ENCODE measurements at regions of chr16 and their contacts with region 1.

Region 1: GRCh38 chr16:84504420-84505248 is at the start of gene MEAK7:
- DNase-seq: peak; percentile 99
- H3K4me3 ChIP-seq: peak within 1 kb of the TSS; percentile 69 to 96 (median 96)
- H3K27ac ChIP-seq: peak within 1 kb of the TSS; percentile 92
- H3K4me1 ChIP-seq: peaks cover 53% of the 10 kb centered on the region
- H3K27me3 ChIP-seq: no peaks in the 10 kb centered on the region
- CTCF ChIP-seq: peak in 1 of 2 donors; percentile 8
- total RNA-seq, gene MEAK7: 73.5 to 107 TPM

Region 2: DNA sequence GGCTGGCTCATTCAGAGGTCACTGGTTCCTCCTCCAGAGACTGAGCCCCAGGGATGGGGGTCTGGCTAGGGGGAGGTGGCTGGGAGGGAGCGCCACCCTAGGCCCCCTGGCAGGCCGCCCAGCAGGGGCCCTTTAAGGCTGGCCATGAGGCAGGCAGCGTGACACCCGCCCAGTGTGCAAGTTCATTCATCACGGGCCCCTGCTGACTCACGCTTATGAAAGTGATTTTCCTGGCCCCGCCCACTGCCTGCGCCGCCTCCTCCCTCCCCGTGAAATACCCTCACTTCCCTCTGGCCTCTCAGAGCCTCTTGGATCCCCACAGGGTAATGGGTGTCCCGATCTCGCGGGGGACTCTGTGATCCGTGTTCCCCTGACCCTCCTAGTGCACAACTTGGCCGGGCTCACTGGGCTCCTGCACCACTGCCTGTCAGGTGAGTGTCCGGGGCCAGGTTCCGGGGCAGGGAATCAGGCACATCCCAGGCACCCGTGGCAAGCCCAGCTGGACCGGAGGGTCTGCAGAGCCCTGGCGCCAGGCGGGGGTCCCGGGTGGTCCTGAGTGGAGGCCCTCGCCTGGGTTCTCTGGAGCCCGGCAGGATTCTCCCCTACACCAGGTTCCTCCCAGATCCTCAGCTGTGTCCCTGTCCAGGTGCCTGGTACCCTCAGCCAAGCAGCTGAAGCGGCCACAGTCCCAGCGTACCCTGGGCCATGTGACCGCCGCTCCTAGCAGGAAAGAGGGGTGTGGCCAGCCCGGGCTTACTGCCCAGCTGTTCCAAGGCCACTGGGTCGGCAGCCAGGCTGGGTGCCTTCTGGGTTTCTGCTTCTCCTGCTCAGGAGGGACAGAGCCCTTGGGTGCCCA is 551.5 kb before region 1 on chr16 and contains the start of gene OSGIN1:
- CTCF ChIA-PET with region 1: no interaction called
- dilution Hi-C with region 1: no loop called
- in situ Hi-C with region 1: no loop called
- intact Hi-C with region 1: loop called (anchors 10 kb)
- DNase-seq: peak; percentile 92
- H3K4me3 ChIP-seq: peak within 1 kb of the TSS; percentile 65 to 76 (median 66)
- H3K27ac ChIP-seq: peak within 1 kb of the TSS; percentile 82
- H3K4me1 ChIP-seq: peaks cover 21% of the 10 kb centered on the region
- H3K27me3 ChIP-seq: no peaks in the 10 kb centered on the region
- CTCF ChIP-seq: no peak
- total RNA-seq, gene OSGIN1: 3.3 to 9.3 TPM

Region 3: DNA sequence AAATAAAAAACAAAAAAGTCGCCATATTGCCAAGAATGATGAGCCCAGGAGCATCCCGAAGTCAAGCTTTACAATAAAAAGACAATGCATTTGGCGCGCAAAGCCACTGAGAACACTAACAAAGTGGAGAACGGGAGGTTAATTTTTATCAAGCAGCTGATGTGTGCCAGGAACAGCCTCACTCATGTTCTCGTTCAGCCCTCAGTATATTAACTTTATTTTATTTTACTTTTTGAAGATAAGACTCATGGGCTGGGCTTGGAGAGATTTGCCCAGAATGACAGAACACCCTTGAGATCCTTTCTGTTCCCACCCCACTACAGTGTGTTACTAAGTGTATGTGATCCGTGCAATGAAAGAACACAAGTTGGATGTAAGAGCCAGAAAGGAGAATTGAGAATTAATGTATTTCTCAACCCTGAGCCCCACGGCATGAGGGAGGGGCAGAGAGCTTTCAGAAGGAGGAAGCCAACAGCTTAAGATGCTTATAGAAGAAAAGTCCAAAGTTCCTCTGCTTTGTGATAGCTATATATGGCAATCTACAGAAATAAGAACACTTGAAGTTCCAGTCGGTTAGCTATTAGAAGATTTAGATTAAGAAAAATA is 64.9 kb after region 1 on chr16:
- CTCF ChIA-PET with region 1: no interaction called
- dilution Hi-C with region 1: loop called (anchors 5 kb)
- in situ Hi-C with region 1: no loop called
- intact Hi-C with region 1: no loop called
- DNase-seq: no peak
- H3K4me3 ChIP-seq: no peak overlapping the region
- H3K27ac ChIP-seq: no peak overlapping the region
- H3K4me1 ChIP-seq: no peaks in the 10 kb centered on the region
- H3K27me3 ChIP-seq: no peaks in the 10 kb centered on the region
- CTCF ChIP-seq: no peak

Region 4: DNA sequence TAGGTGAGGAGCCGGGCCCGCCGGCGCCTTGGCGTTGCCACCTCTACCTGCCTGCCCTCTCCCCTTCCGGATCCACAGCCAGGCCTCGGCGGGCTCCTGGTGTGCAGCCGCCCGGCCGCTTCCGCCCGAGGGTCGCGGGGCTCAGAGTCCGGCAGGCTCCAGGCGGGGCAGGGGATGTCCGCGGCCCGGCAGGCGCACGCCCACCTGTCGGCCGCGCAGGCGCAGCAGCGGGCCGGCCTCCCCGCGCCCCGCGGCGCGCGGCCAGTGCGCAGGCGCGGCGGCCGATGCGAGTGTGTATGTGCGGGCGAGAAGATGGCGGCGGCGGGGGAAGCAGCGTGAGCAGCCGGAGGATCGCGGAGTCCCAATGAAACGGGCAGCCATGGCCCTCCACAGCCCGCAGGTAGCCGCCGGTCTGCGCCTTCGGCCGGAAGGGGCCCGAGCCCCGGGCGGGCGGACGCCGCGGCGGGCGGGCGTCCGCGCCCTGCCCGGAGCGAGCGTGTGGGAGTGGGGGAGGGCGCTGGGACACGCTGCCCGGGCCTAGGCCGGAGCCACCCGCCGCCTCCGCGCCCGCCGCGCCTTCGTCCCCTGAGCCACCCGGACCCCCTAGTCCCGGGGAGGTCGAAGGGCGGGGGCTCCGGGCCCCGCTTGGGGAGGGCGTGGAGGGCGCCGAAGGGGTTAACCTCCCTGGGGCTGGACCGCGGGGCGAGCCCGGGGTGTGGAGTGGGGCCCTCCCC is 195.2 kb after region 1 on chr16 and contains the start of gene USP10:
- CTCF ChIA-PET with region 1: no interaction called
- dilution Hi-C with region 1: no loop called
- in situ Hi-C with region 1: loop called in 1 of 2 experiments (anchors 25 kb)
- intact Hi-C with region 1: no loop called
- DNase-seq: peak; percentile 66
- H3K4me3 ChIP-seq: peak within 1 kb of the TSS; percentile 75 to 90 (median 86)
- H3K27ac ChIP-seq: peak within 1 kb of the TSS; percentile 71
- H3K4me1 ChIP-seq: peaks cover 4% of the 10 kb centered on the region
- H3K27me3 ChIP-seq: no peaks in the 10 kb centered on the region
- CTCF ChIP-seq: no peak
- total RNA-seq, gene USP10: 60.5 to 111 TPM

Region 5: DNA sequence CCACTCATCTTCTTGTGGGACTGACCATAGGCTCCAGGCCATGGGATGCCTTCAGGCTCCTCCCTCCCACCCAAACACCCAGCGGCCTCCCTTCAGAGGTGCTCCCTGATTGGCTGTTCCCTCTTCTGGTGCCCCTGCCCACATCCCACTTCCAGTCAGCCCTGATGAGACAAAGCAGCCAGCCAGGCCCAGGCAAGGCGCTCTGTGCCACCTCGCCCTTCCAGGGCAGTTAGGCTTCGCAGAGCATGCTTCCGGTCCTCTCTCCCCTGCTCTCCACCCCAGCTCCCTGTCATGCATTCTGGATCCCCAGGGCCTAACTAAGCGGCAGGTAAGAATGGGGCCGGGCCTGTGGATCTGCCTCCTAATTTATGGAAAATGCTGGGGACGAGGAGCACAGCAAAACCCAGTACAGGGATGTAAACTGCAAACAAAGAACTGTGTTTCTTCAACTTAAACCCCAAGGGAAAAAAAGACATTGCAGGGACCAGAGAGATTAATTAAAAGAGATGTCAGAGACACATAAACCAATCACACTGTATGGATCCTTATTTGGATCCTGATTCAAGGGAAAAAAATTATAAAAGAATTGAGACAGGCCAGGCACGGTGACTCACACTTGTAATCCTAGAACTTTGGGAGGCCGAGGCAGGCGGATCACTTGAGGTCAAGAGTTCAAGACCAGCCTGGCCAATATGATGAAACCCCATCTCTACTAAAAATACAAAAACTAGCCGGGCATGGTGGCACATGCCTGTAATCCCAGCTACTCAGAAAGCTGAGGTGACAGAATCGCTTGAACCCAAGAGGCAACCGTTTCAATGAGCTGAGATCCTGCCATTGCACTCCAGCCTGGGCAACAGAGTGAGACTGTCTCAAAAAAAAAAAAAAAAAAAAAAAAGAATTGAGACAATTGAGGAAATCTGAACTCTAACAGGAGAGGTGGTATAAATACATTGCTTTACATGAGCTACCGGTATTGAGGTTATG is 480.7 kb after region 1 on chr16:
- CTCF ChIA-PET with region 1: no interaction called
- dilution Hi-C with region 1: no loop called
- in situ Hi-C with region 1: loop called in 1 of 2 experiments (anchors 25 kb)
- intact Hi-C with region 1: no loop called
- DNase-seq: peak; percentile 77
- H3K4me3 ChIP-seq: no peak overlapping the region
- H3K27ac ChIP-seq: peak overlapping the region; percentile 57
- H3K4me1 ChIP-seq: peaks cover 20% of the 10 kb centered on the region
- H3K27me3 ChIP-seq: no peaks in the 10 kb centered on the region
- CTCF ChIP-seq: no peak

Measured in mammary epithelial cell (primary cell).